AG04449 (cell line): ENCODE measurements at regions of chr12 and their contacts with region 1.

Region 1: GRCh38 chr12:130826149-130826801 is 12.8 kb downstream of the STX2 start:
- DNase-seq: no peak
- H3K4me3 ChIP-seq: no peak overlapping the region
- CTCF ChIP-seq: peak; percentile 88

Region 2: GRCh38 chr12:130803702-130804101 is 22.6 kb before region 1 on chr12:
- CTCF ChIA-PET with region 1: interaction called, 13 read pairs
- POLR2A ChIA-PET with region 1: no interaction called
- DNase-seq: no peak
- H3K4me3 ChIP-seq: no peak overlapping the region
- CTCF ChIP-seq: no peak

Region 3: GRCh38 chr12:130838951-130839769 is 12.9 kb after region 1 on chr12 and contains the start of gene STX2:
- CTCF ChIA-PET with region 1: interaction called, 63 read pairs
- POLR2A ChIA-PET with region 1: no interaction called
- DNase-seq: no peak
- H3K4me3 ChIP-seq: peak within 1 kb of the TSS; percentile 74
- CTCF ChIP-seq: peak; percentile 51